Activated naive CD4-positive, alpha-beta T cell treated with anti-CD3 and anti-CD28 coated beads for 36 hours (primary cell): ENCODE measurements at regions of chr6 and their contacts with region 1.

Region 1: GRCh38 chr6:90285611-90286381 is 10.8 kb downstream of the BACH2 start:
- DNase-seq: peak; percentile 68
- H3K4me3 Mint-ChIP-seq: peak overlapping the region; percentile 70
- H3K27ac Mint-ChIP-seq: peak overlapping the region; percentile 94
- H3K4me1 Mint-ChIP-seq: peaks cover 94% of the 10 kb centered on the region
- H3K27me3 Mint-ChIP-seq: no peaks in the 10 kb centered on the region

Region 2: DNA sequence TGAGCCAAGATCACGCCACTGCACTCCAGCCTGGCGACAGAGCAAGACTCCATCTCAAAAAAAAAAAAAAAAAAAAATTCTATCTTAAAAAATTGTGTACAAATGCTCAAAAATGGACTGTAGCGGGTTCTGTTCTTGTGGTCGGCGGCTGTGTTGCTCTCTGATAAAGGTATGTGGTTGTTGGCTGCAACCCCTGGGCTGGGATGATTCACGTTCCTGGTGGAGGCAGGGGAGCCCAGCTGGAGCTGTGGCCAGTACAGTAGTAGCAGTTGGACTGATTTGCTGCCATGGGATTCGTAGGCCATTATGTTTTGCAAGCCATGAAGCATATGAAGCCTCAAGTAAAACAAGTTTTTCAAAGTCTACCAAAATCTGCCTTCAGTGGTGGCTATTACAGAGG is 488.5 kb before region 1 on chr6:
- CTCF ChIA-PET with region 1: no interaction called
- intact Hi-C with region 1: no loop called
- DNase-seq: no peak
- H3K4me3 Mint-ChIP-seq: no peak overlapping the region
- H3K27ac Mint-ChIP-seq: no peak overlapping the region
- H3K4me1 Mint-ChIP-seq: peaks cover 27% of the 10 kb centered on the region
- H3K27me3 Mint-ChIP-seq: no peaks in the 10 kb centered on the region

Region 3: DNA sequence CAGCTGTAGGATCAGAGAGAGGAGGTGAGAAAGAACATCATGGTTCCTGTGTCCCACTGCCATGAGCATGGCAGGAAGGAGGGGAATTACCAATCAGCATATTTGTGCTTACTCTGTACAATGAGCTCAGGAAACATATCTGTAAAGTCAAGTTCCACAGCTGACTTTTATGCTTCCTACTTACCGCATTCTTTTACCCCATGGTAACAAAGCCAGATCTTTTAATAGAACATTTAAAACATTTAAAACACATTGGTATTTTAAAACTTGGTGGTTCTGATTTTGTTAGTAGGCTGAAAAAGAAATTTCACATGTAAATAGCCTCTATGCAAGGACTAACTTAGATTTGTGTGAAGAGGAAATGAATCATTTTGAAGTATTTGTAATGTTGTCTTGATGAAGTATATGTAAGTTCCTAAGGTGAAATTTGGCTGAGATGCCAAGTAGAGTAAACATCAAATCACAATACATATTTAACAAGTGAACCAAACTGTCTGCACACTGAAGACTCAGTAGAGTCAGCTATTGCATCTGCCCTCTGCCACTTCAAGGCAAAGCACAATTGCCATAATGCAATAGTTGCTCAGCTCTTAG is 276.8 kb before region 1 on chr6:
- CTCF ChIA-PET with region 1: no interaction called
- intact Hi-C with region 1: loop called (anchors 1 kb)
- DNase-seq: peak; percentile 66
- H3K4me3 Mint-ChIP-seq: no peak overlapping the region
- H3K27ac Mint-ChIP-seq: peak overlapping the region; percentile 91
- H3K4me1 Mint-ChIP-seq: peaks cover 58% of the 10 kb centered on the region
- H3K27me3 Mint-ChIP-seq: no peaks in the 10 kb centered on the region

Region 4: DNA sequence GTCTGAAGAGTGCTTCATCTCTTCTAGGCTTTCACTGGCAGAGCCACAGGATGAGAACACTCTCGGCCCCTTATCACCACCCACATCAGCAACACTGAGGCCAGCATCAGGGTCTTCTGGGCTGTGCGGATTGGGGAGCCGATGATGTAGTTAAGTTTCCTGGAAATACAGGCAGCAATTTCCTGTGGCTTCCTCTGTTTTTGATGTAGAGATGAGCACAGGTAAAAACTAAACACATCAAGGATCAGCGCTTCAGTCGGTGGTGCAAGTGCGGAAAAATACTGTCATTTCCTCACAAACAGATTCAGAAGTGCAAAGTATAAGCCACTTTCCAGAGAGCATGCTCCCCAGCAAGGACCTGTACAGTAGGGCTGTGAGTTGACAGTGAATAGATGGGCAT is 51.8 kb before region 1 on chr6:
- CTCF ChIA-PET with region 1: no interaction called
- intact Hi-C with region 1: loop called (anchors 1 kb)
- DNase-seq: peak; percentile 77
- H3K4me3 Mint-ChIP-seq: peak overlapping the region; percentile 60
- H3K27ac Mint-ChIP-seq: peak overlapping the region; percentile 95
- H3K4me1 Mint-ChIP-seq: peaks cover 94% of the 10 kb centered on the region
- H3K27me3 Mint-ChIP-seq: no peaks in the 10 kb centered on the region

Region 5: GRCh38 chr6:90296346-90297114 is 10.7 kb after region 1 on chr6 and contains the start of gene BACH2:
- CTCF ChIA-PET with region 1: interaction called, 8 read pairs
- intact Hi-C with region 1: loop called (anchors 1 kb)
- DNase-seq: peak; percentile 99
- H3K4me3 Mint-ChIP-seq: peak within 1 kb of the TSS; percentile 86
- H3K27ac Mint-ChIP-seq: peak within 1 kb of the TSS; percentile 97
- H3K4me1 Mint-ChIP-seq: peaks cover 41% of the 10 kb centered on the region
- H3K27me3 Mint-ChIP-seq: peaks cover 2% of the 10 kb centered on the region
- total RNA-seq, gene BACH2: 75.1 to 77.9 TPM

Region 6: DNA sequence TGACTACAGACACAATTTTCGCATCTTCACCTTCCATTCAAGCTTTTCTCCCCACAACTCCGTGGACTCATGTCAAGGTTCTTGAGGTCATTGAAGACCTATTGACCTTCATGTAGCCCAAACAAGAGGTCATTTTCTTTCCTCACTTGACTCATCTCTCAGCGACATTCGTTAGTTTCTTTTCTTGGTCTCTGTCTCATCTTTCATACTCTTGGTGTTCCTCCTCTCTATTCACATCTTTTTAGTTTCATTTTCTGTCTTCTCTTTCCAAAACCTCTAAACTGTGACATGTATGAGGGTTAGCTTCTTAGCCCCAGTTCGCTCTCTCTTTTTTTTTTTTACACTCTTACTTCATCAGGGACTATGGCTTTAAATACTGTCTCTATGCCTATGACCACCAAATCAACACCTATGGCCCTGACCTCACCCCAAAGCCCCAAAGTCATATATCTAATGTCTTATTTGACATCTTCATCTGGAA is 139.4 kb after region 1 on chr6:
- CTCF ChIA-PET with region 1: interaction called, 5 read pairs
- intact Hi-C with region 1: loop called (anchors 1 kb)
- DNase-seq: peak; percentile 46
- H3K4me3 Mint-ChIP-seq: peak overlapping the region; percentile 48
- H3K27ac Mint-ChIP-seq: peak overlapping the region; percentile 92
- H3K4me1 Mint-ChIP-seq: peaks cover 41% of the 10 kb centered on the region
- H3K27me3 Mint-ChIP-seq: no peaks in the 10 kb centered on the region

Region 7: DNA sequence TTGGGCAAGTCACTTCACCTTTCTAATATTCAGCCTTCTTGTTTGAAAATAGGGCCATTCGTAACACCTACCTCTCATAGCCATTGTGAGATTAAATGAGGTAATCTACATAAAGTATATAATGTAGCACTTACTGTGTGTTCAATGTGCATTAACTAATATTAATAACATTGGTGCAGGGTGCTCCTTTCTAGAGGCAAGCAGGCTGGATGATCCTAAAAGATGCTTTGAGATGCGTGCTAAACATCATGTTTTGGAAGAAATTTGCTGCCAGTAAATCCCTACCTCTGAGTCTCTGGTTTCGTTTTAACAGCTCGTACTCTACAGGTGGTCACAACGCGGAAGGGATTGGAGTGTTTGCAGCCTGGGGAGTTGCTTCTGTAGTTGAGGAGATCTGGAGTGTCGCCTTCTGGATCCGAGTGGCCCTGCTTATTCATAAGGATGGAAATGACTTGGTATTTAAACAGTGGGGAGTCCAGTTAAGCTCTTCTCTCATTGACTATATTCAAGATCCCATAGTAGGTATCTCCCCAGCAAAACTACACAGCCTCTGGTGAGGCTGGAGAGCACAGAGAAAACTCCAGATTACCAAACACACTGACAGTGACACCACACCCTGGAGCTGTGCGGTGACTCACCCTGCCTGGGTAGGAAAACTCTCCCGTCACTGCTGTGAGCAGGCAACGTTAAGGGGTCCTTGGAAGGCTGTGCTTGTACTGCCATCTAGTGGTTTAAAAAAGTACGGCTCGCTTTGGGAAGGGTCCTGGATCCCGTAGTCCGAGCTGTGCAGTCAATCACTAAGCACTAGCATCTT is 193.2 kb after region 1 on chr6:
- CTCF ChIA-PET with region 1: interaction called, 176 read pairs
- intact Hi-C with region 1: loop called (anchors 1 kb)
- DNase-seq: peak; percentile 94
- H3K4me3 Mint-ChIP-seq: no peak overlapping the region
- H3K27ac Mint-ChIP-seq: peak overlapping the region; percentile 81
- H3K4me1 Mint-ChIP-seq: peaks cover 60% of the 10 kb centered on the region
- H3K27me3 Mint-ChIP-seq: no peaks in the 10 kb centered on the region

Region 8: DNA sequence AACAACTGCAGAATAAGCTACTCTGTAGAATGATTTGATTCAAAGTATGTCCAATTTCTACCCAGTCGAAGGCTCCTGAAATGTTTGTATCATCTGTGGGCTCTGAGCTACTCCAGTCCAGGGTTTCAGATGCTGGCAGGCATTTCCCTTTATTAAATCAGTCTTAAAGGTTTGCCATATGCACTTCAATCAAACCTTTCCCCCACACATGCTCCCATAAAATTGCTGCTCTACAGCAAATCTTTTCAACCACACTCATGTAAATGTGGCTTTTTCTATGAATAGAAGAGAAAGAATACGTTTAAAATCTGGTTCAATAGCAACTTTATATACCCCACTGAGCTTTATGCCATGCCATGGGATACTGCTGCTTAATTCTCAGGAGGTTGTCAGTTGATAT is 543.5 kb after region 1 on chr6:
- CTCF ChIA-PET with region 1: no interaction called
- intact Hi-C with region 1: no loop called
- DNase-seq: no peak
- H3K4me3 Mint-ChIP-seq: no peak overlapping the region
- H3K27ac Mint-ChIP-seq: no peak overlapping the region
- H3K4me1 Mint-ChIP-seq: no peaks in the 10 kb centered on the region
- H3K27me3 Mint-ChIP-seq: peaks cover 4% of the 10 kb centered on the region